GM10248 (cell line): ENCODE measurements at regions of chr4 and their contacts with region 1.

Region 1: GRCh38 chr4:83259586-83259985 is 25.0 kb downstream of the COQ2 start:
- DNase-seq: no peak
- CTCF ChIP-seq: no peak

Region 2: DNA sequence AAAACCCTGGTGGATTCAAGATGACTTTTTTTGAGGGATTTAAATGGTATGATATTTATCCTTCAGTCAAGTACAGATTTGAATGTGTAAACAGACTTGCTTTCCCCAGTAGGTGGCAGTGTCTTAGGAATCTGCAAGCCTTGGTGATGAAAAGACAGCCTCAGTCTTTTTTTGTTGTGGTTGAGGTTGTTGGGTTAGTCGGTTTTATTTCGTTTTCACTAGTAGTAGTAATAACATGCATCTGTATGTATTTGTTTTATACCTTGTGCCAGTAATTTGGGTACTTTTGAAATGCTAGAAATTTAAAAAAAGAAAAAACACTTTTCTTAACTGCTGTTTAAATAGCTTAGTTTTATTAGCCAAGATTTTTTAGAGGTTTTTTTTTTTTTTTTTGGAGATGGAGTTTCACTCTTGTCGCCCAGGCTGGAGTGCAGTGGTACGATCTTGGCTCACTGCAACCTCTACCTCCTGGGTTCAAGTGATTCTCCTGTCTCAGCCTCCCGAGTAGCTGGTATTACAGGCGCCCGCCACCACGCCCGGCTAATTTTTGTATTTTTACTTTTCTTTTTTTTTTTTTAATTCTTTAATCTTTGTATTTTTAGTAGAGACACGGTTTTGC is 185.4 kb before region 1 on chr4:
- CTCF ChIA-PET with region 1: interaction called, 11 read pairs
- POLR2A ChIA-PET with region 1: no interaction called
- DNase-seq: peak; percentile 80
- CTCF ChIP-seq: peak; percentile 61

Region 3: DNA sequence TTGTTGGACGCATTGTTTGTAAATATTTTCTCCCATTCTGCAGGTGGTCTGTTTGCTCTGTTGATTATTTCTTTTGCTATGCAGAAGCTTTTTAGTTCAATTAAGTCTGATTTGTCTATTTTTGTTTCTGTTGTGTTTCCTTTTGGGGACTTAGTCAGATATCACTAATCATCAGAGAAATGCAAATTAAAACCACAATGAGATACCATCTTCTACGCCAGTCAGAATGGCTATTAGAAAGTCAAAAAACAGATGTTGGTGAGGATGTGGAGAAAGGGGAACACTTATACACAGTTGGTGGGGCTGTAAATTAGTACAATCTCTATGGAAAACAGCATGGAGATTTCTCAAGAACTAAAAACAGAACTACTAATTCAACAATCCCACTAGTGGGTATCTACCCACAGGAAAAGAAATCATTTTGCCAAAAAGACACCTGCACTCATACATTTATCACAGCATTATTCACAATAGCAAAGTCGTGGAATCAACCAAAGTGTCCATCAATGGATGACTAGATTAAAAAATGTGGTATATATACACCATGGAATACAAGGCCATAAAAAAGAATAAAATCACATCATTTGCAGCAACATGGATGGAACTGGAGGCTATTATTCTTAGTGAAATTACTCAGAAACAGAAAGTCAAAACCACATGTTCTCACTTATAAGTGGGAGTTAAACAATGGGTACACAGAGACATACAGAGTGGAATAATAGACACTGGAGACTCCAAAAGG is 16.9 kb after region 1 on chr4:
- CTCF ChIA-PET with region 1: interaction called, 35 read pairs
- POLR2A ChIA-PET with region 1: no interaction called
- DNase-seq: no peak
- CTCF ChIP-seq: no peak